Sciatic nerve (tissue), 2 donors: ENCODE measurements at regions of chr13 and their contacts with region 1.

Region 1: GRCh38 chr13:99656092-99656745 is 154.9 kb downstream of the TM9SF2 start:
- DNase-seq: peak; percentile 91
- ATAC-seq: peak; percentile 79

Region 2: DNA sequence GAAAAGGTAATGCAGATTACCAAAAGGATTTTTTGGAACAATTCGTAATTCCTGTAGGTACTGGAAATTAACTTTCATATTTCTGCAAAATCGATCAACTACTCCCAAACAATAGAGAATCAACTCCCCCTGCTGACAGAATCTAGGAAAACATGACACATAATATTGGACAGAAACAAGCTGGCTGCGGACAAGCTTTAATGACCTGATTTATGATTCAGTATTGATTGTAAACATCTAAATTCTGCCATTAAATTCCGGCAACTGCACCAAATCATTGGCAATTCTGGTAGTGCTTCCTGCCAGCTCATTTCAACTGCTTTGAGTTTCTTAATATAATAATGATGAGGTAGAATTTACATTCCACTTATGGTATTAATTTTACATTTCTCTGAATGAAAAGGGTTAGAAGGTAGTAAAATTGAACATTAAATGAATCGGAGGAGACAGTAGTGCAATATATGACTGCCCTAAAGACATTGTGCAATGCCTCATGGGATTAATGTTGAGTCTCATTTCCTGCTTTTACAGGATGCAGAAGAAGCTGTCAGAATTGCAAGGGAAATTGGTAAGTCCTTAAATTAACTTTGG is 579.2 kb after region 1 on chr13:
- intact Hi-C with region 1: loop called (anchors 10 kb)
- DNase-seq: no peak
- ATAC-seq: no peak

Region 3: DNA sequence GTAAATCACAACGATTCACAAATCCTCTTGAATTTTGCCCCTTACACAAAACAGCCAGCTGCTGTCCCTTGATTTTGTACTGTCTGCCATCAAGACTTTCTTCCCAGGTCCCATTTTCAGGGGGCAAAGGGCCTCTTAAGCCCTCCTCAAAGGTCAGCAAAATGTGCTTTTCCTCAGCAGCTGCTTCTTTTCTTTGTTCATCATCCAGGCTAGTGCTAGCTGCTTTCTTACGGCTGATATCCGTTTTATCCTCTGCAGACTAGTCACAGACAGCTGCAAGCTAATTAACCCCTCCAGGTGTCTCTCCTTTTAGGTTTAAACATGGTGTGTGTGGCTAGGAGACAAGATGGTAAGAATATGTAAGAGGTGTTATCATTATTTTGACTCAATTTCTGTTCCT is 1669.2 kb after region 1 on chr13:
- intact Hi-C with region 1: no loop called
- DNase-seq: no peak
- ATAC-seq: no peak